ENCODE measurements at regions of chr12 and their contacts with region 1.

Region 1: DNA sequence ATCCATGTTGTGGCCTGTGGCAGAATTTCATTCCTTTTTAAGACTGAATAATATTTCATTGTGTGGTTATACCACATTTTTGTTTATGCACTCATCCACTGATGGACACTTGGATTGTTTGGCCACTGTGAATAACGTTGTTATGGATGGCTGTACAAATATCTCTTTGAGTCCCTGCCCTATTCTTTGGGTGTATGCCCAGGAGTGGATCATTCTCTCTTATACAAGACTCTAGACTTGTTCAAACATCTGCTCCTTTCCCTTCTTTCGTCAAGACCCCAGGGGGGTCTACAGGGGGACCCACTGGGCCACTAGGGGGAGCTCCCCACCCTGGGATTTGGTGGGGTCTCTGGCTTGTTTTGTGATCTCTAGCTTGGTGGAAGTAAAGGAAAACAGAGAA is 77.4 kb downstream of the FBXL14 start:
- DNase-seq: peak; percentile 85
- ATAC-seq: peak; percentile 88
- H3K4me3 Mint-ChIP-seq: no peak overlapping the region
- H3K27ac Mint-ChIP-seq: no peak overlapping the region
- H3K4me1 Mint-ChIP-seq: peaks cover 12% of the 10 kb centered on the region
- H3K27me3 Mint-ChIP-seq: no peaks in the 10 kb centered on the region; the same call in 1 of the 2 replicates
- CTCF ChIP-seq: peak; percentile 88

Region 2: GRCh38 chr12:1346126-1346525 is 170.9 kb before region 1 on chr12:
- CTCF ChIA-PET with region 1: no interaction called
- POLR2A ChIA-PET with region 1: no interaction called
- DNase-seq: no peak
- ATAC-seq: no peak
- H3K4me3 Mint-ChIP-seq: no peak overlapping the region
- H3K27ac Mint-ChIP-seq: no peak overlapping the region
- H3K4me1 Mint-ChIP-seq: peaks cover 8% of the 10 kb centered on the region
- H3K27me3 Mint-ChIP-seq: no peaks in the 10 kb centered on the region
- CTCF ChIP-seq: no peak

Region 3: GRCh38 chr12:1457901-1458300 is 59.1 kb before region 1 on chr12:
- CTCF ChIA-PET with region 1: no interaction called
- POLR2A ChIA-PET with region 1: no interaction called
- DNase-seq: no peak
- ATAC-seq: no peak
- H3K4me3 Mint-ChIP-seq: no peak overlapping the region
- H3K27ac Mint-ChIP-seq: no peak overlapping the region
- H3K4me1 Mint-ChIP-seq: peaks cover 4% of the 10 kb centered on the region
- H3K27me3 Mint-ChIP-seq: no peaks in the 10 kb centered on the region
- CTCF ChIP-seq: no peak

Region 4: GRCh38 chr12:1504304-1505114 is 12.5 kb before region 1 on chr12:
- CTCF ChIA-PET with region 1: interaction called, 10 read pairs
- POLR2A ChIA-PET with region 1: no interaction called
- DNase-seq: no peak
- ATAC-seq: no peak
- H3K4me3 Mint-ChIP-seq: no peak overlapping the region
- H3K27ac Mint-ChIP-seq: no peak overlapping the region
- H3K4me1 Mint-ChIP-seq: no peaks in the 10 kb centered on the region
- H3K27me3 Mint-ChIP-seq: no peaks in the 10 kb centered on the region; the same call in 1 of the 2 replicates
- CTCF ChIP-seq: no peak

Region 5: DNA sequence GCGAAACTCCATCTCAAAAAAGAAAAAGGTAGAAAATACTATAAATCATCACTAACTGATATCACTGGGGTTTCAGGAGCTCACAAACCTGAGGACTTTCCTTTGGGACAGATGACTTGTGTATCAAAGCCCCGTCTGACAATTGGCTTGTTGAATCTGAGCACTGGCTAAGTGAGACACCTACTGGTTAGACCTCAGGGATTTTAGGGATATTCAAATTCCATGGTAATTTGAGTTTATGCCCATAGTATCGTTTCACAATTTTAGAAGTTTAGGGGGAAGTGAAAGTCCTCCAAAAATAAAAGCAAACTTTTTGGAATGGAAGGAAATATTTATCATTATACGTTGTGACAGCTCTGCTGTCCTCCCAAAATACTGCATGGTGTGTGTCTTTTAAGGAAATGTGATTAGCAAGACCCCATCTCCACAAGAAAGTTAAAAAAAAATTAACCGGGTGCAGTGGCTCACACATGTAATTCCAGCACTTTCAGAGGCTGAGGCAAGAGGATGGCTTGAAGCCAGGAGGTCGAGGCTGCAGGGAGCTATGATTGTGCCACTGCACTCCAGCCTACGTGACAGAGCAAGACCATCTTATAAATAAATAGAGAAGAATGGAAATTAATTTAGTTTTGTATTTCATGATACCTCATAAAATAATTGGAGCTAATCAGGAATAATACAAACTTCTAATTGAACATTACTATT is 28.1 kb after region 1 on chr12:
- CTCF ChIA-PET with region 1: interaction called, 15 read pairs
- POLR2A ChIA-PET with region 1: no interaction called
- DNase-seq: no peak
- ATAC-seq: no peak
- H3K4me3 Mint-ChIP-seq: no peak overlapping the region
- H3K27ac Mint-ChIP-seq: no peak overlapping the region
- H3K4me1 Mint-ChIP-seq: peaks cover 13% of the 10 kb centered on the region
- H3K27me3 Mint-ChIP-seq: peaks cover 7% of the 10 kb centered on the region
- CTCF ChIP-seq: no peak

Region 6: DNA sequence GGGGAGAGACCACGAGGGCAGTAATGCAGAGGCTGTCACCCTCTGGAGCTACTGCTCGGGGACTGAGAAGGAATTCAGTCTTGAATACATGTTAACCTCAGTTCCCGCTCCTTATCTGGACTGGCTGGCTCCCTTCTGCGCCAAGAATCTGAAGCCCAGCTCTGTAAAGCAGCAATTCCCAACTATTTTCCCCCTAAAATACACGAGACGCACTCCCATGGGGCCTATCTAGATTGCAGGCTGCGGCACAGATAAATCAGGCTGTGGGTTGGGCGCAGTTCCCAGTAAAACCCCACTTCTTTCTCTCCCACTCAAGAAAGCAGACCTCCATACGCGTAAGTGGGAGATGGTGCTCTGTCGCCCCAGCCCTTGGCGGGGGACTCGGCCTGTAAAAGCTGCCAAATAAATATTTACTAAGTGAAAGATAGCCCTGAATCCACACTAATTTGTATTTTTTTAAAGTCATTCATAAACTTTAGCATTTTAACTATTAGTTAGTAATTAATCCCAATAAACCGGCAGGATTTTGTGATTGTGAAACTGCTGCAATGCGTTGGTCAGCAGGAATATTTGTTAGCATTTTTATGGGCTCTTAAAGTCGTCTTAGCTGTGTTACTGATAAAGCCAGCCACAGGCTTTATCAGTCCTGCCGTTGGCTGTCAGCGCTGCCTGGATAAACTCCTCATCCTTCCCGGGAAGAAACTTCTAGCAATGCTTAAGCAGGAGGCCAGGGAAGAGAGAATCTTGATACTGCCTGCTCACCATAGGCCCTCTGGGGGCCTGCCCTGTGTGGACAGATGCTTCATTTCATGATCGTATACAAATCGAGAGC is 59.6 kb after region 1 on chr12:
- CTCF ChIA-PET with region 1: interaction called, 24 read pairs
- POLR2A ChIA-PET with region 1: no interaction called
- DNase-seq: no peak
- ATAC-seq: no peak
- H3K4me3 Mint-ChIP-seq: no peak overlapping the region
- H3K27ac Mint-ChIP-seq: no peak overlapping the region
- H3K4me1 Mint-ChIP-seq: 0 out of 2 replicates have a peak, but pooled peaks cover 6% of the 10 kb centered on the region
- H3K27me3 Mint-ChIP-seq: peaks cover 8% of the 10 kb centered on the region
- CTCF ChIP-seq: no peak

Region 7: DNA sequence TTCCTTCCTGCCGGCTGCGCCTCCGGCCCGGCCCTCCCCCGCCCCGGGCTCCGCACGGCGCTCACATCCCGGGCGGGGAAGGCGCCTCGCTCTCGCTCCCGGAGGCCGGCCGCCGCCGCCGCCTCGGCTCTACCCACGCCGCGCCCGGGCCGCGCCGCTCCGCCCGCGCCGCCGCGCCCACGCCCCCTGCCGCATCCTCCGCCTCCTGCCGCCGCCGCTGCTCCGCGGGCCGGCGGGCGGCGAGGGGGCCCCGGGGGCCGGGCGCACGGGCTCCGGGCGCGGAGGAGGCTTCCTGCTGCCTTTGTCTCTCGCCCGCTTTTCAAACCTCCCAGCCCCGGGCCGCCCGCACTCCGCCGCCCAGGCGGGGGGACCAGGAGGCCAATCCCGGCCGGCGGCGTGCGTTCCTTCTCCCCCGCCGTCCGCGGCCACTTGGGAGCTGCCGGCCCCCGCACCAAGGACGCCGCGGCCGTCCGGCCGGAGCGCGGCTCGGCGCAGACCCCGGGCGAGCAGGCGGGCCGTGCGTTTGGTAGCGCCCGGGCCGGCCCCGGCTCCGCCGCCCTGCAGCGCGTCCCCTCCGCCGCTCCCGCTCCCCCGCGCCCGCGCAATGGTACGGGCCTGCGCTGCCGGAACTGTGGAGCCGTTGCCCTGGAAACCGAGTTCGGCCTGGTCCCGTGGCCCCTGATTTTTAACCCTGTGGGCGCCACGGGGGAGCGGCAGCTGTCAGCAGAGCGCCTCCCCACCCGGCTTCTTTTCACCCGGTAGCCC is 77.4 kb after region 1 on chr12 and contains the start of gene FBXL14:
- CTCF ChIA-PET with region 1: interaction called, 22 read pairs
- POLR2A ChIA-PET with region 1: no interaction called
- DNase-seq: peak; percentile 91
- ATAC-seq: peak; percentile 58
- H3K4me3 Mint-ChIP-seq: peak within 1 kb of the TSS; percentile 86
- H3K27ac Mint-ChIP-seq: no peak within 1 kb of the TSS
- H3K4me1 Mint-ChIP-seq: peaks cover 49% of the 10 kb centered on the region
- H3K27me3 Mint-ChIP-seq: peaks cover 55% of the 10 kb centered on the region
- CTCF ChIP-seq: no peak
- total RNA-seq, gene FBXL14: 12.0 to 14.6 TPM (median 12.9 TPM) in 3 replicates